Gastrocnemius medialis (tissue), 4 donors: ENCODE measurements at regions of chr15 and their contacts with region 1.

Region 1: DNA sequence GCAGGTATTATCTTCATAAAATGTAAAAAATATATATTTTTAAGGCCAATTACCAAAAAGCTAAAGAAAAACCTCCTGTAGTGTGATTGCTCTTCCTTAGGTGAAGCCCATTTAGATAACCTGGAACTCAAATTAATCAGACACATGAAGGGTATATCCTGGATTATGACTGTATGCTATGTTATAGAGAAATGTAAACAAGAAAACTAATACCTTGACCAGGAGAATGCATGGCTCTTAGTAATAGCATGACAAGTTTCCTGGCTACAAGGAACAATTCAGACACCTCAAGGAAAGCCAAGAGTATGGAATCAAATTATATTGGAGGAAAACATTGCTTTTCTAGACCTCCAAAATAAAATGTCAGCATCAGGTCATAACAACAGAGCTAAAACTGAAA is 14.0 kb upstream of the CFAP161 start:
- DNase-seq: no peak
- ATAC-seq: no peak
- H3K4me3 ChIP-seq: no peak overlapping the region
- H3K27ac ChIP-seq: no peak overlapping the region
- H3K4me1 ChIP-seq: no peaks in the 10 kb centered on the region
- H3K27me3 ChIP-seq: peaks cover 5 to 20% (median 9%) of the 10 kb centered on the region in 3 donors
- CTCF ChIP-seq: no peak
- POLR2A ChIP-seq: no peak

Region 2: GRCh38 chr15:81174792-81175327 is 54.8 kb after region 1 on chr15:
- in situ Hi-C with region 1: no loop called
- intact Hi-C with region 1: loop called (anchors 5 kb)
- DNase-seq: no peak
- ATAC-seq: no peak
- H3K4me3 ChIP-seq: no peak overlapping the region
- H3K27ac ChIP-seq: no peak overlapping the region
- H3K4me1 ChIP-seq: peaks cover 0 to 6% of the 10 kb centered on the region in 2 donors
- H3K27me3 ChIP-seq: no peaks in the 10 kb centered on the region
- CTCF ChIP-seq: no peak
- POLR2A ChIP-seq: no peak